ENCODE measurements at regions of chr14 and their contacts with region 1.

Region 1: GRCh38 chr14:37150414-37150813 is 22.0 kb downstream of the SLC25A21 start:
- DNase-seq: no peak
- H3K4me3 ChIP-seq: no peak overlapping the region
- CTCF ChIP-seq: peak; percentile 48

Region 2: DNA sequence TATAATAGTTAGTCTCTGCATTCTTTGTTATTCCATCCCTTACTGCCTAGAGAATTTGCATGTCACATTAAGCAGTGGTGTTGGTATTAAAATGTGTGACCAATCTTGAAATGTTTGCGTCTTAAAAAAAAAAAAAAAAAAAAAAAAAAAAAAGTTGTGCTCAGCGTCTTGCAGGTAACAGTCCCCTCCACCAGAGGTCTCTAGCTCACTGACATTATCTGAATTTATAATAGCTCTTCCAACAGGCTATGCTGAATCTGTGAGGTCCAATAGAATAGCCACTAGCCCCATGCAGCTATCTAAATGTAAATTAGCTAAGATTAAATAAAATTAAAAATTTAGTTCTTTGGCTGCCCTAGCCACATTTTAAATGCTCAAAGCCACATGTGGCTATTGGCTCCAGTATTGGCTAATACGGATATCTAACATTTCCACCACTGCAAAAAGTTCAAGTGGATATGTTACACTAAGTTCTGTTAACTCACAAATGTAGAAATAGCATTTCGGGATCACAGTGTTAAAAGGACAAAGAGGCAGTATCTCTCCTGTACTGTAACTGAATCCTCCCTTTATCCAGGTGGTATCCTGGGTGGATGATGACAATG is 596.7 kb before region 1 on chr14:
- CTCF ChIA-PET with region 1: interaction called, 160 read pairs
- POLR2A ChIA-PET with region 1: no interaction called
- DNase-seq: peak; percentile 2
- H3K4me3 ChIP-seq: no peak overlapping the region
- CTCF ChIP-seq: peak; percentile 61

Region 3: GRCh38 chr14:36647824-36648753 is 502.3 kb before region 1 on chr14:
- CTCF ChIA-PET with region 1: interaction called, 168 read pairs
- POLR2A ChIA-PET with region 1: no interaction called
- DNase-seq: no peak
- H3K4me3 ChIP-seq: peak overlapping the region; percentile 52
- CTCF ChIP-seq: peak; percentile 60

Region 4: GRCh38 chr14:36941783-36942521 is 208.5 kb before region 1 on chr14:
- CTCF ChIA-PET with region 1: interaction called, 10 read pairs
- POLR2A ChIA-PET with region 1: no interaction called
- DNase-seq: no peak
- H3K4me3 ChIP-seq: no peak overlapping the region
- CTCF ChIP-seq: peak; percentile 93

Region 5: DNA sequence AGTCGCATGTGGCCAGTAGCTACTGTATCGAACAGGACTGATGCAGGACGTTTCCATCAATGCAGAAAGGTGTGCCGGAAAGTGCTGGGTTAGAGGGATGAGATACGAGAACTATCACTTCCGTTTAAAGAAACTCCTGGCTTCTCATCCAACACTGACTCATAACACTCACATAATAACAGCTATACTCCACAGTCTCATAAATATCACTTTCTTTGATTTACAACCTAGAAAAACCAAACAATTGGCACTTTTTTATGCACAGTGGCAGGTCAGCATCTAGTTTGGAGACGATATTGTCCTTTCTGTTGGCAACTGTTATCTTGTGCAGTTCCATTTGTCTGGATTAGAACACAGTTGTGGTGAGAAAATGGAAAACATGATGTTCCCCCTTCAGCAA is 21.4 kb before region 1 on chr14:
- CTCF ChIA-PET with region 1: interaction called, 107 read pairs
- POLR2A ChIA-PET with region 1: no interaction called
- DNase-seq: no peak
- H3K4me3 ChIP-seq: no peak overlapping the region
- CTCF ChIP-seq: no peak

Region 6: GRCh38 chr14:37457334-37457733 is 306.9 kb after region 1 on chr14:
- CTCF ChIA-PET with region 1: no interaction called
- POLR2A ChIA-PET with region 1: no interaction called
- DNase-seq: no peak
- H3K4me3 ChIP-seq: no peak overlapping the region
- CTCF ChIP-seq: no peak